ENCODE measurements at regions of chr19 and their contacts with region 1.

Region 1: GRCh38 chr19:13748169-13748828 is 16.0 kb upstream of the MRI1 start:
- DNase-seq: no peak
- H3K4me3 ChIP-seq: peak overlapping the region; percentile 70
- H3K4me3 Mint-ChIP-seq: peak overlapping the region; percentile 84 to 96 (median 89)
- H3K27ac ChIP-seq: peak overlapping the region; percentile 89
- H3K27ac Mint-ChIP-seq: peak overlapping the region; percentile 79 to 97 (median 95)
- H3K4me1 ChIP-seq: peaks cover 20% of the 10 kb centered on the region
- H3K4me1 Mint-ChIP-seq: peaks cover 22 to 38% (median 33%) of the 10 kb centered on the region in 3 donors
- H3K27me3 ChIP-seq: no peaks in the 10 kb centered on the region
- H3K27me3 Mint-ChIP-seq: no peaks in the 10 kb centered on the region

Region 2: GRCh38 chr19:13731147-13731964 is 16.9 kb before region 1 on chr19:
- CTCF ChIA-PET with region 1: interaction called, 5 read pairs
- POLR2A ChIA-PET with region 1: interaction called, 24 read pairs
- DNase-seq: peak; percentile 90 to 96 (median 93)
- H3K4me3 ChIP-seq: peak overlapping the region; percentile 99
- H3K4me3 Mint-ChIP-seq: peak overlapping the region; percentile 86 to 96 (median 89)
- H3K27ac ChIP-seq: peak overlapping the region; percentile 69
- H3K27ac Mint-ChIP-seq: peak overlapping the region; percentile 78 to 97 (median 94)
- H3K4me1 ChIP-seq: peaks cover 16% of the 10 kb centered on the region
- H3K4me1 Mint-ChIP-seq: peaks cover 10 to 24% (median 17%) of the 10 kb centered on the region in 3 donors
- H3K27me3 ChIP-seq: no peaks in the 10 kb centered on the region
- H3K27me3 Mint-ChIP-seq: peaks cover 0 to 1% of the 10 kb centered on the region in 2 donors

Region 3: DNA sequence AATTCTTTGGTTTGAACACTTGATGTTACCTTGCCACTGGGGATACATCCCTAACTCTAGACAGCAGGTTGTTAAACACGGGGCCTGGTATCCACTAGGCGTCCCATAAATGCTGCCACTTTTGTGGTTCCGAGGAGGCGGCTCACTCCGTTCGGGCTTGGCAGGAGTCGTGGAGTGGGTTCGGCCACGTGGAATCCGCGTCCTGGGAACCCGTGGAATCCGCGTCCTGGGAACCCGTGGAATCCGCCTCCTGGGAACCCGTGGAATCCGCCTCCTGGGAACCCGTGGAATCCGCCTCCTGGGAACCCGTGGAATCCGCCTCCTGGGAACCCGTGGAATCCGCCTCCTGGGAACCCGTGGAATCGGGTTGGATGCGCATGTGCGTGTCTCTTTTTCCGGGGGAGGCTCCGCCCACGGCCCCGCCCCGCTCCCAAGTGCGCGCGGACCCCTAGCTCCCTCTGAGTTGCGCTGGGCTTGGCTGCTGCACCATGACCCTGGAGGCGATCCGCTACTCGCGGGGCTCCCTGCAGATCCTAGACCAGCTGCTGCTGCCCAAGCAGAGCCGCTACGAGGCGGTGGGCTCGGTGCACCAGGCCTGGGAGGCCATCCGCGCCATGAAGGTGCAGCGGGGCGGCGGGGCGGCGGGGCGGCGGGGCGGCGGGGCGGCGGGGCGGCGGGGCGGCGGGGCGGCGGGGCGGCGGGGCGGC is 16.0 kb after region 1 on chr19 and contains the start of gene MRI1:
- CTCF ChIA-PET with region 1: no interaction called
- POLR2A ChIA-PET with region 1: interaction called, 11 read pairs
- DNase-seq: peak; percentile 48 to 73 (median 56)
- H3K4me3 ChIP-seq: peak within 1 kb of the TSS; percentile 73
- H3K4me3 Mint-ChIP-seq: peak within 1 kb of the TSS; percentile 82 to 94 (median 90)
- H3K27ac ChIP-seq: peak within 1 kb of the TSS; percentile 57
- H3K27ac Mint-ChIP-seq: peak within 1 kb of the TSS; percentile 84 to 94 (median 90)
- H3K4me1 ChIP-seq: peaks cover 16% of the 10 kb centered on the region
- H3K4me1 Mint-ChIP-seq: peaks cover 18 to 32% (median 20%) of the 10 kb centered on the region in 3 donors
- H3K27me3 ChIP-seq: no peaks in the 10 kb centered on the region
- H3K27me3 Mint-ChIP-seq: no peaks in the 10 kb centered on the region
- total RNA-seq, gene MRI1: 42.4 to 43.5 TPM

Region 4: DNA sequence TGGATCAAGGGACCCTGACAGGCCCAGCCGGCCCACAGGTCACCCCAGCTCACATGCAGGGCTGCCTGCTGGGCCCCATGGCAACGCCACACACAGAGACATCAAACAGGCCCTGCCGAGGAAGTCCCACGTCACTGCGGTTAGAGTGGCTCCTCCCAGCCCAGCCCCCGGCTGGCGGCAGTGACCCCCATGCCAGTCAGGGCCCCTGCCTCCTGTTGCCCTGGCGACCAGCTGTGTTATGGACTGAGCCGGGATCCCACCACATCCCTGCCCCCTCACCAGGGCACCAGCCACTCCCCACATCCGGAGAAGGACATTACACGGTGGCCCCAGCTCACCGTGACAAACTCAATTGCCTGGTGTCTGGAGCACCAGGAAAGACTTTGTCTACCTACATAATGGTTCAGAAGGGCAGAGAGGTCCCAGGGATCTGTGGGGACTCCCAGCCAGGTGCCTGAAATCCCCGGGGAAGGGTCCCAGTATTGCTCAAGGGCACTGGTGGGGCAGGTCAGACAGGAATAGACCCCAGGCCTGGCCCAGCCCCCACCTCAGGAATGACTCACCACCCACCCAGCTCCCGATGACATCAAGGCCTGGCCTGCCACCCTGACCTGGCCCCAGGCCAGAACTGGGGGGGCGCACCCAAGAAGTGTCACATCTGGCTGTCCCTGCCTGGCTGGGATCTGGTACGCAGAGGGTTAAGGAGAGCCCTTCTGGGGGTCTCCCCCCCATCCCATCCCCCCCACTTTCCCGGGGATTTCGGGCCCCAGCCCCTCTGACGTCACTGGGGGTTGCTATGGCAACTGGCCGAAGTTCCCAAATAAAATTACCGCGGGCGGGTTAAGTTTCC is 98.5 kb after region 1 on chr19:
- CTCF ChIA-PET with region 1: interaction called, 3 read pairs
- POLR2A ChIA-PET with region 1: interaction called, 12 read pairs
- DNase-seq: peak; percentile 94 to 100 (median 99)
- H3K4me3 ChIP-seq: peak overlapping the region; percentile 70
- H3K4me3 Mint-ChIP-seq: peak overlapping the region; percentile 83 to 92 (median 89)
- H3K27ac ChIP-seq: peak overlapping the region; percentile 100
- H3K27ac Mint-ChIP-seq: peak overlapping the region; percentile 99 to 100 (median 100)
- H3K4me1 ChIP-seq: peaks cover 62% of the 10 kb centered on the region
- H3K4me1 Mint-ChIP-seq: peaks cover 43 to 81% (median 45%) of the 10 kb centered on the region in 3 donors
- H3K27me3 ChIP-seq: no peaks in the 10 kb centered on the region
- H3K27me3 Mint-ChIP-seq: peaks cover 0 to 18% of the 10 kb centered on the region in 2 donors

Measured in CD8-positive, alpha-beta memory T cell (primary cell).